Activated T-helper 1 cell treated with anti-CD3 and anti-CD28 coated beads, Interleukin-12 subunit alpha, Interleukin-12 subunit beta, Interleukin-2, Interleukin-4 antibody, amounts not matched to agents 30 ng/mL and 10 ng/mL and 1 ng/mL, durations not matched to agents 14 hours and 24 hours and 36 hours (primary cell): ENCODE measurements at regions of chr1 and their contacts with region 1.

Region 1: GRCh38 chr1:78627321-78627720 is 7.1 kb downstream of the IFI44L start:
- DNase-seq: no peak
- H3K4me3 Mint-ChIP-seq: peak overlapping the region; percentile 58
- H3K27ac Mint-ChIP-seq: peak overlapping the region; percentile 60
- H3K4me1 Mint-ChIP-seq: peaks cover 72% of the 10 kb centered on the region
- H3K27me3 Mint-ChIP-seq: no peaks in the 10 kb centered on the region

Region 2: GRCh38 chr1:78229344-78229743 is 398.0 kb before region 1 on chr1:
- intact Hi-C with region 1: no loop called
- DNase-seq: no peak
- H3K4me3 Mint-ChIP-seq: no peak overlapping the region
- H3K27ac Mint-ChIP-seq: no peak overlapping the region
- H3K4me1 Mint-ChIP-seq: no peaks in the 10 kb centered on the region
- H3K27me3 Mint-ChIP-seq: no peaks in the 10 kb centered on the region

Region 3: DNA sequence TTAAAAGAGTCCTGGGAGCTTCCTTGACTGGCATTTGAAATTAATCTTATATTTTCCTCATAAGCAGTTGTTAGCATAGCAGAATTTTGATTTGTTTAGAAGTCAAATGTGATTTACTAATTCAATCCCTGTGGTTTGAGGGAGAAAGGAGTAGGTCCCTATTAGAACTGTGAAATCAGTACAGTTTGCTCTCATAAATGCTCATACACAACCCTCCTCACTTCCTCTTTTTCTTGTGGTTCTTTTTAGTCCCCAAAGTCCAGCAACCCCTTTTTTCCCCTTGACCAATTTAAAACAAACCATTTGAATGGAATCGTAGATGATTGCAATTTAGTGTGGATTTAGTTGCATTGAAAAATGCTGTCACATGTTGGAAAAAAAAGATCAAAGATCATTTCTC is 13.1 kb after region 1 on chr1:
- intact Hi-C with region 1: loop called (anchors 1 kb)
- DNase-seq: no peak
- H3K4me3 Mint-ChIP-seq: no peak overlapping the region
- H3K27ac Mint-ChIP-seq: peak overlapping the region; percentile 11
- H3K4me1 Mint-ChIP-seq: peaks cover 59% of the 10 kb centered on the region
- H3K27me3 Mint-ChIP-seq: no peaks in the 10 kb centered on the region